ENCODE measurements at regions of chr4 and their contacts with region 1.

Region 1: DNA sequence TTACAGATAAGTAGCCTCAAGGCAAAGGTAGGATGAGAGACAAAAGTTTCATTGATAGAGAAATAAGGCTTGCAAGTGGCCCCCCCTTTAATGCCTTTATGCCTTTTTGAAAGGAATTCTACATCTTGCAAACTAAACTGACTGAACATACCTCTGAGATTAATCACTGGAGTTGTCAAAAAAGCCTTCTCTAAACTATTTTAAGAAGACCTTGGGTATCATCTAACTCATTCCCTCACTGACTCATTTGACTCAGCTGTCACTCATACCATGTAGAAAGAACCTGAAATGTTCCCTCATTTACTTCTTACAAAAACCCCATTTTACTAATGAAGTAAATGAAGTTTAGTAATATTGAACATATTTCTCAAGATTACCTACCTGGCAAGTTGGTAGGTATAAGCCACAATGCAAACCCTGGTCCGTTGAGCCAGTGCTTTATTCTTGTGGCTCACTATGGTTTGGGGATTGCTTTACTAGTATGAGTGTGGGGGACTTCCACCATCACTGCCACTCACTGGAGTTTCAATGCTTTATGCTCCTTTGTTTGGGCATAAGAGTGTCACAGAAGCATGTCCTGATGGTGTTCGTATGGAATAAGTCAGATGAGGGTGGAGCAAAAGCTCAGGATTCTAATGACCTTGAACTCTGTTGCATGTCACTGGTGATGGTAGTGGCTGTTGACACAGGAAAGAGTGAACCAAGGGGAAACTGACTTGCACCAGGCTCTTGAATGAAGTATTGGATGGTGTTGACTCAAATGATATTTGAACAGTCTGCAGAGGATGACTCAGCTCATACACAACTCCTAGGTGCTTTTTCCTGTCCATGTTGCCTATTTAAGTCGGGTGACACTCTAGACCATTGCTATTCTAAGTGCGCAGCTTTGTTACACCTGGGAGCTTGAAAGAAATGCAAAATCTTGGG is 305.5 kb upstream of the EMCN start:
- DNase-seq: peak; percentile 57
- H3K4me3 Mint-ChIP-seq: no peak overlapping the region
- H3K27ac Mint-ChIP-seq: peak overlapping the region; percentile 88
- H3K4me1 Mint-ChIP-seq: peaks cover 15% of the 10 kb centered on the region
- H3K27me3 Mint-ChIP-seq: no peaks in the 10 kb centered on the region

Region 2: DNA sequence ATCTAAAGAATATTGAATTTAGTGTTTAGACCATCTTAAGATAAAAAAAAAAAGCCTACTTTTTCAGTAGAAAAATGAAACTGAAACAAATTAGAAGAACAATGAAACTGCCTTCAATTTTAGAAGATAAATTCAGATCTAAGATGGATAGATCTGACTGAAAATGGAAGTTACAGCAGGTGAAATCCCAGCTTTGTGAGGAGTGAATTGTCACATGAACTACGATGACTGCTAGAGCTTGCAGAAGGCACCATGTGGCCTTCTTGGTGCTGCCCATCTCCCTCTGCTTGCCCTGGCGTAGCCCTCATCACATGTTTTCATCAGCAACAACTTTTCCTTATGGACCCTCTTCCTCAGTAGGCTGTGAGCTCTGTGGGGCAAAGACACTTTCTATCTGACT is 254.1 kb before region 1 on chr4:
- CTCF ChIA-PET with region 1: no interaction called
- POLR2A ChIA-PET with region 1: no interaction called
- intact Hi-C with region 1: loop called (anchors 1 kb)
- DNase-seq: peak; percentile 12
- H3K4me3 Mint-ChIP-seq: no peak overlapping the region
- H3K27ac Mint-ChIP-seq: no peak overlapping the region
- H3K4me1 Mint-ChIP-seq: peaks cover 24% of the 10 kb centered on the region
- H3K27me3 Mint-ChIP-seq: no peaks in the 10 kb centered on the region

Region 3: DNA sequence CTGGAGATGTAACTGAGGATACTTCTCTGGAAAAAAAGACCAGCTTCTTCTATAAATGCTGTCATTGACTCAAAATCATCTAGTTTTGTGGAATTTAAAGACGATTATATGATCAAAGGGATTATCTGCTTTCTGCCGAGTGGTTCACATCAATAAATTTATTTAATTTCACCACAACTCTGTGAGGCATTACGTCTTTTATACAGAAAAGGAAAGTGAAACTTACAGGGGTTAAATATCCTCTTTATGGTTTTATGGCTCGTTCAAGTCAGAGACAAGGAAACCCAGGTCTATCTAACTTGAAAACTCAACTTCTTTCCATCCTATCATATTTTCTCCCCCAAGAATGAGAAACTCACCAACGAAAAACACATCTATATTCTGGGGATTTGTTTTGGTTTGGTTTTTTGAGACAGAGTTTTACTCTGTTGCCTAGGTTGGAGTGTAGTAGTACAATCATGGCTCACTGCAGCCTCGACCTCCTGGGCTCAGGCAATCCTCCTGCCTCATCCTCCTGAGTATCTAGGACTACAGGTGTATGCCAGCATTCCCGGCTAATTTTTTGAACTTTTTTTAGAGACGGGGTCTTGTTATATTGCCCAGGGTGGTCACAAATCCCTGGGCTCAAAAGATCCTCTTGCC is 72.3 kb after region 1 on chr4:
- CTCF ChIA-PET with region 1: no interaction called
- POLR2A ChIA-PET with region 1: no interaction called
- intact Hi-C with region 1: loop called (anchors 1 kb)
- DNase-seq: no peak
- H3K4me3 Mint-ChIP-seq: peak overlapping the region; percentile 70
- H3K27ac Mint-ChIP-seq: peak overlapping the region; percentile 3
- H3K4me1 Mint-ChIP-seq: peaks cover 14% of the 10 kb centered on the region
- H3K27me3 Mint-ChIP-seq: no peaks in the 10 kb centered on the region

Region 4: DNA sequence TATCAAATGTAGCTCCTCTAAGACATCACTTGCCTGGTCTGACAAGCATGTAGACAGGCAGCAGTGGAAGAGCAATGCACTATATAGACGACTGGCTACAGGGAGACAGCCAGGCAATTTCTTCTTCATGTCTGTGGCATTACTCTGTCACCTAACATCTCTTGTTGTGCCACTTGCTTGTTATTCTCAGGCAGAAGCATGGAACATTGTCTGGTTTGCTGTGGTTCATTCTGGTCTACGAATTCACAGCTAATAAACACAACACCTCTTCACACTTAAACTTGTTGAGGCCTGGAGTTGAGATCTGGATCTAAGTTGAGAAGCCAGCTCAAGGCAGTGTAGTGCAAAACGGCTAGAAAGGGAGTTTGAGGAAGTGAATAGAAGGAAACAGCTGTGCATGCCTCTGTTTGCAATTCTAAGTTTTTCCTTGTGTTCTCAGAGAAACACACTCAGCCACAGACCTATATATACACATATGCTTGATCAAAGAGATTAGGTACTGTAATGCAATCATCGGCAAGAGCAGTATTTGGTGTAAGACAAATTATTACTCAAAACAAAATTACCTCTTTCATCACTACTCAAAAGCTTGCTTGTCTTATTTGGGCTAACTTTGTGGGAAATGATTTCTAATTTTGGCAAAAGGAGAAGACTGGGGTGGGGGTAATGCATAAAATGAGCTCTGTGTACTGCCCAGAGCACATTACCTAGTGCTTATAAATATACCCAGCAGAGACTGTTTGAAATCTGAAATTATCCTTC is 280.2 kb after region 1 on chr4:
- CTCF ChIA-PET with region 1: no interaction called
- POLR2A ChIA-PET with region 1: no interaction called
- intact Hi-C with region 1: loop called (anchors 5 kb)
- DNase-seq: no peak
- H3K4me3 Mint-ChIP-seq: no peak overlapping the region
- H3K27ac Mint-ChIP-seq: peak overlapping the region; percentile 42
- H3K4me1 Mint-ChIP-seq: peaks cover 19% of the 10 kb centered on the region
- H3K27me3 Mint-ChIP-seq: no peaks in the 10 kb centered on the region

Measured in activated CD4-positive, alpha-beta memory T cell treated with anti-CD3 and anti-CD28 coated beads for 36 hours (primary cell).